HepG2 (cell line): ENCODE measurements at regions of chr20 and their contacts with region 1.

Region 1: GRCh38 chr20:53738039-53738944 is 144.7 kb upstream of the ZNF217 start:
- DNase-seq: peak; percentile 88
- ATAC-seq: peak; percentile 90
- H3K4me3 ChIP-seq: peak overlapping the region; percentile 44 to 59 (median 45)
- H3K27ac ChIP-seq: peak overlapping the region; percentile 73
- H3K4me1 ChIP-seq: peaks cover 83% of the 10 kb centered on the region
- H3K27me3 ChIP-seq: no peaks in the 10 kb centered on the region; a peak in 1 of 5 replicates
- CTCF ChIP-seq: no peak; the same call in 1 of the 2 replicates
- EP300 ChIP-seq: peak in 1 of 2 experiments; percentile 63; a peak in 1 of 4 replicates
- POLR2A ChIP-seq: peak; percentile 58 to 74
- RAD21 ChIP-seq: 0 out of 2 replicates have a peak, but pooled peaks have one; percentile 24

Region 2: DNA sequence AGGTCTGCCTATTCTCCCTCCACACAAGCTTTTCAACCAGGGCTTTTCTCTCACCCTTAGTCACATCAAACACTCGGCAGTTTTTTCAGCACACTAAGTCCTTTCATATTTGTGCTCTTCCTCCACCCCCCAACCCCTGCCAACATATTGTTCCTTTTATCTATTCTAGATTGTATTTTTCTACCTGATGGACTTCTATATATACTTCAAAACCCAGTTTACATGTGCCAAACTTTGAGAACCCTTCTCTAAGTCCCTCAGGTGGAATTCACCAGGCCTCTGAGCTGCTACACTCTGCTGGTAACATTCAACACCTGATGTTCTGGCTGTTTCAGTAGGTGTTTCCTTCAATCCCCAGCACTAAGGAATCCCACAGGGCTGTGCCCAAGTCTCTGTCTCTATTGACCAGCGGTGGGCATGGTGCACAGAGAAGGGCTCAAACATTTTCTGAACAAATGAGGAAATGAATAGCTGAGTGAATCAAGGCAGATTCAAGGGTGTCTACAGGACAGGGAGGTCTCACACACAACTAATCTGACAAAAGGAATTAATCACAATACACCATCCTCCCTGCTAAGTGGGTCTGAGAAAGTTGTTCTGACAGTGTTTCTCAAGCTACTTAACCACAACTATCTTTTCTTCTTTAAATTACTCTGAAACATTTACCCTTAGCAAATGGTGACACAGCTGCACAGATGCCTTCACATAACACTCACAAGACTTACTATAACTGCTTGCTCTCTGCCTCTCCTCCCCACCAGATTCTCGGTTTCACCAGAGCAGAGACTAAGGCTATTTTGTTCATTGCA is 599.6 kb before region 1 on chr20:
- CTCF ChIA-PET with region 1: no interaction called
- POLR2A ChIA-PET with region 1: no interaction called
- in situ Hi-C with region 1: no loop called
- intact Hi-C with region 1: no loop called
- DNase-seq: no peak
- ATAC-seq: no peak
- H3K4me3 ChIP-seq: no peak overlapping the region
- H3K27ac ChIP-seq: no peak overlapping the region
- H3K4me1 ChIP-seq: no peaks in the 10 kb centered on the region
- H3K27me3 ChIP-seq: no peaks in the 10 kb centered on the region
- CTCF ChIP-seq: no peak
- EP300 ChIP-seq: no peak
- POLR2A ChIP-seq: no peak
- RAD21 ChIP-seq: no peak

Region 3: GRCh38 chr20:53578492-53579222 is 159.6 kb before region 1 on chr20:
- CTCF ChIA-PET with region 1: no interaction called
- POLR2A ChIA-PET with region 1: interaction called, 17 read pairs
- in situ Hi-C with region 1: no loop called
- intact Hi-C with region 1: loop called (anchors 1 kb)
- DNase-seq: peak; percentile 94
- ATAC-seq: peak; percentile 45
- H3K4me3 ChIP-seq: peak overlapping the region; percentile 12 to 43 (median 38); a peak in 4 of 6 replicates
- H3K27ac ChIP-seq: peak overlapping the region; percentile 77
- H3K4me1 ChIP-seq: peaks cover 63% of the 10 kb centered on the region
- H3K27me3 ChIP-seq: no peaks in the 10 kb centered on the region
- CTCF ChIP-seq: peak; percentile 93
- EP300 ChIP-seq: peak in 1 of 2 experiments; percentile 33; a peak in 1 of 4 replicates
- POLR2A ChIP-seq: peak in 1 of 2 experiments; percentile 34; a peak in 1 of 4 replicates
- RAD21 ChIP-seq: peak; percentile 96

Region 4: DNA sequence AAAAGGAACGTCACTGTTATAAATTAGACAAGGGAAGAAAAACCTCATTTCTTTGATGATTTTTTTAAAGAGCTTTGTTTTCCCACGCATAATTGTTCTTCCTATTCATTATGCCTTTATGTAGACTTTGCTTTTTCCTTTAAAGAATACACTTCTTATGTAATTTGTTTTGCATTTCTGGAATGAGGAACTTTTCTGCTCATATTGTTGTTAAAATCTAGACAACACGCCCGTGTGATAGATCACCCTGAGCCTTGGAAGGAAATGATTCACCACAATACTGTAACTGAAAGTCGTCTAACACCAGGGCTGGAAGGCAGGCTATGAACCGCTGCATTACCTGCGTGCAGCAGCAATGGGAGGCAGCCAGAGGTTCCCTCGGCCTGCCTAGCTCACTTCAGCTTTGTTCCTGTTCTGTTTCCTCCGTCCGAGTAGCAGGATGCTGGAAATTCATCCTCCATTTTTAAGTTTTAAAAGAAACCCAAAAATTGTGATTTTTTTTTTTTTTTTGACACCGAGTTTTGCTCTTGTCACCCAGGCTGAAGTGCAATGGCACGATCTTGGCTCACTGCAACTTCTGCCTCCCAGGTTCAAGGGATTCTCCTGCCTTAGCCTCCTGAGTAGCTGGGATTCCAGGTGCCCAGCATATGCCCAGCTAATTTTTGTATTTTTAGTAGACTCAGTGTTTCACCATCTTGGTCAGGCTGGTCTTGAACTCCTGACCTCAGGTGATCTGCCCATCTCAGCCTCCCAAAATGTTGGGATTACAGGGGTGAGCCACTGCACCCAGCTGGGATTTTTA is 95.1 kb before region 1 on chr20:
- CTCF ChIA-PET with region 1: no interaction called
- POLR2A ChIA-PET with region 1: interaction called, 12 read pairs
- in situ Hi-C with region 1: no loop called
- intact Hi-C with region 1: no loop called
- DNase-seq: no peak
- ATAC-seq: peak; percentile 77
- H3K4me3 ChIP-seq: peak overlapping the region; percentile 34 to 64 (median 48); a peak in 5 of 6 replicates
- H3K27ac ChIP-seq: peak overlapping the region; percentile 93
- H3K4me1 ChIP-seq: peaks cover 81% of the 10 kb centered on the region
- H3K27me3 ChIP-seq: no peaks in the 10 kb centered on the region
- CTCF ChIP-seq: no peak
- EP300 ChIP-seq: no peak; a peak in 1 of 4 replicates
- POLR2A ChIP-seq: peak in 1 of 2 experiments; percentile 77; a peak in 2 of 4 replicates
- RAD21 ChIP-seq: no peak

Region 5: DNA sequence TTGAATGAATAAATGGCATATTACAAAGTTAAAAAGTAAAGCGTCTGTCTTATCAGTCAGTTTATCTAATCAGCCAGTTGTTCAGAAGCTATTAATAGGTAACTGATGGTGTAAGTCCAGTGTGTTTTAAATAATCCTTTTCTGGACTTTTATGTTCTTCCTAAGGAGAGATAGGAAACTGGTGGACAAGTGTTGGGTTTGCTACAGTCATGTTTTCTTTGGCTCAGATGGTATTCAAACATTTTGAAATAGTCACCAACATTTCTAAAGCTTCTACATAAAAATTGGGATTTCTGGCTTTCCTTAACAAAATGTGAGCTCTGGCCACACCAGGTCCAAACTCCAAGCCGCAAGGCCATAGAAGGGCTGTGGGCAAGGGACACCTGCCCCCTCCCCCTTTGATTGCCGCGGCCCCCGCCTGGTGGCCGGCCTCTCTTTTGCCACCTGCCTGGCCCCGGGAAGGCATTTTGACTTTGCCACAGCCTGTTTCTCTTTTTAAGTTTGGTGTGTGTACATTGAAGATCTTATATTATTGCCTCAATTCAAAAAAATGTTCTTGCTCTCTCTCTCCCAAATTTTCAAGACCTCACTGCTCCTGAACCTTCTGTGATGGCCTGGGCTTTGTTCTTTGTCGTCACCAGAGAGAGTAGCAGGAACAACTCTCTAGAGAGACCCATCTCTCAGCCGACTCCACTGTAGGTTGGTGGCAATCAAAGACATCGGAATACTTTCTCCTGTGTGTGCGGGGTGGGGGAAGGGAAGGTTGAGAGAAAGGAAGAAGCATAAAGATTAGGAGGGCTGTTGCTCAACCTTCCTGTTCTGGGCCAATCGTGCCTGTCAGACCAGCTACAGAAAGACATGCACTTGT is 60.6 kb before region 1 on chr20:
- CTCF ChIA-PET with region 1: no interaction called
- POLR2A ChIA-PET with region 1: interaction called, 51 read pairs
- in situ Hi-C with region 1: no loop called
- intact Hi-C with region 1: loop called (anchors 2 kb)
- DNase-seq: peak; percentile 92
- ATAC-seq: peak; percentile 97
- H3K4me3 ChIP-seq: peak overlapping the region; percentile 45 to 70 (median 67)
- H3K27ac ChIP-seq: peak overlapping the region; percentile 90
- H3K4me1 ChIP-seq: peaks cover 62% of the 10 kb centered on the region
- H3K27me3 ChIP-seq: no peaks in the 10 kb centered on the region
- CTCF ChIP-seq: peak; percentile 77
- EP300 ChIP-seq: peak; percentile 7 to 80; a peak in 3 of 4 replicates
- POLR2A ChIP-seq: peak in 1 of 2 experiments; percentile 47; a peak in 2 of 4 replicates
- RAD21 ChIP-seq: peak; percentile 91

Region 6: GRCh38 chr20:53763707-53764414 is 25.6 kb after region 1 on chr20:
- CTCF ChIA-PET with region 1: no interaction called
- POLR2A ChIA-PET with region 1: interaction called, 51 read pairs
- in situ Hi-C with region 1: no loop called
- intact Hi-C with region 1: no loop called
- DNase-seq: peak; percentile 100
- ATAC-seq: peak; percentile 95
- H3K4me3 ChIP-seq: no peak overlapping the region; a peak in 1 of 6 replicates
- H3K27ac ChIP-seq: peak overlapping the region; percentile 89
- H3K4me1 ChIP-seq: peaks cover 77% of the 10 kb centered on the region
- H3K27me3 ChIP-seq: no peaks in the 10 kb centered on the region
- CTCF ChIP-seq: no peak
- EP300 ChIP-seq: peak; percentile 95 to 99; a peak in 3 of 4 replicates
- POLR2A ChIP-seq: peak; percentile 26 to 48; a peak in 2 of 4 replicates
- RAD21 ChIP-seq: 0 out of 2 replicates have a peak, but pooled peaks have one; percentile 15

Region 7: DNA sequence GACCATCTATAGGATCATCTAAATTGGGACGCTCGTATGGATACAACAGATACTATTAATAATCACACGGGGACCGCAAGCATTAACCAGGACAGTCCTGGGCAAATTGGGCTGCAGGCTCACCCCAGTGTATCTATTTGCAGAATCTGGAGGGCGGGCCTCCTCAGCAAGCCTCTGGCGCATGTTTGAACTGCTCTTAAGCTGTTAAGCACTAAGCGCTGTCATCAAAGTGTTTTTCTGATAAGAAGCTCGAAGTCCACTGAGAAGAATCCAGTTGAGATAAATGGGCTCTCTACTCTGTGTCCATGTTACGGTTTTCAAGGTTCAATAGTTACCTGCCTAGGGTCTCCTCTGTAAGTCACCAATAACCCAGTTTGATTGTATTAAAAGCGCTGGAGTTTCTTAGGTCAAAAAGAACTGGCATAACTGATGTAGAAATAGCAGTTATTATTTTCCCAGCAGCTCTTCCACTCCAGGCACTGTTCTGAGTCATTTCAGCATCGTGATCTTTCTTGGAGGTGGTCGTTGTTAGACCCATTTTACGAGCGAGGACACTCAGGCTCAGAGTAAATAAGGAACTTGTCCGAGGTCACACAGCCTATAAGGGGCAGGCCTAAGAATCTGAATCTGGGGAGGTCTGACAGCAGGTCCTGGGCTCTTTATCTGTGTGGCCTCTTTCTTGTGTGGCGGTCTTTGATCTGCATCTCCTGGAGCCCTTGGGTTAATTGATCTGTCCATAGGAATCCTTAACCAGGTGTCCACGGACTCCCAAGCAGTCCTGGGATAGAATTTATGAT is 62.7 kb after region 1 on chr20:
- CTCF ChIA-PET with region 1: no interaction called
- POLR2A ChIA-PET with region 1: interaction called, 30 read pairs
- in situ Hi-C with region 1: no loop called
- intact Hi-C with region 1: loop called (anchors 1 kb)
- DNase-seq: peak; percentile 100
- ATAC-seq: peak; percentile 95
- H3K4me3 ChIP-seq: peak overlapping the region; percentile 28 to 48 (median 44); a peak in 4 of 6 replicates
- H3K27ac ChIP-seq: peak overlapping the region; percentile 86
- H3K4me1 ChIP-seq: peaks cover 92% of the 10 kb centered on the region
- H3K27me3 ChIP-seq: no peaks in the 10 kb centered on the region
- CTCF ChIP-seq: 0 out of 2 replicates have a peak, but pooled peaks have one; percentile 20
- EP300 ChIP-seq: peak; percentile 95 to 99; a peak in 3 of 4 replicates
- POLR2A ChIP-seq: 0 out of 4 replicates have a peak, but pooled peaks have one; percentile 23 to 36
- RAD21 ChIP-seq: peak; percentile 56

Region 8: GRCh38 chr20:53819973-53820451 is 81.7 kb after region 1 on chr20:
- CTCF ChIA-PET with region 1: no interaction called
- POLR2A ChIA-PET with region 1: no interaction called
- in situ Hi-C with region 1: no loop called
- intact Hi-C with region 1: no loop called
- DNase-seq: no peak
- ATAC-seq: peak; percentile 83
- H3K4me3 ChIP-seq: no peak overlapping the region
- H3K27ac ChIP-seq: no peak overlapping the region
- H3K4me1 ChIP-seq: peaks cover 15% of the 10 kb centered on the region
- H3K27me3 ChIP-seq: no peaks in the 10 kb centered on the region
- CTCF ChIP-seq: no peak
- EP300 ChIP-seq: no peak
- POLR2A ChIP-seq: no peak
- RAD21 ChIP-seq: no peak

Region 9: DNA sequence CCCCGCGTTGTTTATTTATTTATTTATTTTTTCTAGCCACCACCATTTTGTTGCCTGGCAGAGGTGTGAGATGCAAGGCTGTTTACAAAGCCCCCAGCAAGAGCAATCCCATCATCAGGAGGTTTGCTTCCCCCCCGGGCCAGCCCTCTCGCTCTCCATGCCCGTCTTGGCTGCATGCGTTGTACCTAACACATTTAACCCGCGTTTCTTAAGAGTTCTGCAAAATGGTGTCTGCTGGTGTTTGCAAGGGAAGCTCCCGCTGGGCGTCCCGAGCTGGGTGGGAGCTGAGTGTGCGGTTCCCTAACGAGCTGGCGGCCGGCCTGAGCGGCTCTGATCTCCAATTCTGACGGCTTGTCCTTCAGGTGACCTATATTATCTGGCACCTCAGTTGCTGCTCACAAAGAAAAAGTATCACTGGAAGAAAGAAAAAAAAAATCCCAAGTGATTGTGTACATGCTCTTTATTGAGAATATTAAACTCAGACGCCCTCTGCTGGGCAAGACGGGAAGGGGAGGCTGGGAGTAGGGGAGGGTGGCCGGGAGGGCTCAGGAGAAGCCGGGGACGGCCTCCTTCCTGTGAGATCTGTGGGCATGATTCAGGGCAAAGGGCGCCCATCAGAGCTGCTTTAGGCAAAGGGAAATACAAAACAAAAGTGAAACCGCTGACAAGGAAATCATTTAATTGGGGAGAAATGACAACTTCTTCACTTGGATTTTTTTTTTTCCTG is 177.3 kb after region 1 on chr20:
- CTCF ChIA-PET with region 1: interaction called, 3 read pairs
- POLR2A ChIA-PET with region 1: interaction called, 10 read pairs
- in situ Hi-C with region 1: no loop called
- intact Hi-C with region 1: loop called (anchors 5 kb)
- DNase-seq: peak; percentile 84
- ATAC-seq: peak; percentile 92
- H3K4me3 ChIP-seq: peak overlapping the region; percentile 73 to 88 (median 80)
- H3K27ac ChIP-seq: peak overlapping the region; percentile 17
- H3K4me1 ChIP-seq: peaks cover 48% of the 10 kb centered on the region
- H3K27me3 ChIP-seq: peaks cover 0 to 2% of the 10 kb centered on the region in 2 experiments; a peak in 1 of 5 replicates
- CTCF ChIP-seq: peak; percentile 96
- EP300 ChIP-seq: no peak; a peak in 1 of 4 replicates
- POLR2A ChIP-seq: no peak
- RAD21 ChIP-seq: peak; percentile 83